ENCODE measurements at regions of chr3 and their contacts with region 1.

Region 1: DNA sequence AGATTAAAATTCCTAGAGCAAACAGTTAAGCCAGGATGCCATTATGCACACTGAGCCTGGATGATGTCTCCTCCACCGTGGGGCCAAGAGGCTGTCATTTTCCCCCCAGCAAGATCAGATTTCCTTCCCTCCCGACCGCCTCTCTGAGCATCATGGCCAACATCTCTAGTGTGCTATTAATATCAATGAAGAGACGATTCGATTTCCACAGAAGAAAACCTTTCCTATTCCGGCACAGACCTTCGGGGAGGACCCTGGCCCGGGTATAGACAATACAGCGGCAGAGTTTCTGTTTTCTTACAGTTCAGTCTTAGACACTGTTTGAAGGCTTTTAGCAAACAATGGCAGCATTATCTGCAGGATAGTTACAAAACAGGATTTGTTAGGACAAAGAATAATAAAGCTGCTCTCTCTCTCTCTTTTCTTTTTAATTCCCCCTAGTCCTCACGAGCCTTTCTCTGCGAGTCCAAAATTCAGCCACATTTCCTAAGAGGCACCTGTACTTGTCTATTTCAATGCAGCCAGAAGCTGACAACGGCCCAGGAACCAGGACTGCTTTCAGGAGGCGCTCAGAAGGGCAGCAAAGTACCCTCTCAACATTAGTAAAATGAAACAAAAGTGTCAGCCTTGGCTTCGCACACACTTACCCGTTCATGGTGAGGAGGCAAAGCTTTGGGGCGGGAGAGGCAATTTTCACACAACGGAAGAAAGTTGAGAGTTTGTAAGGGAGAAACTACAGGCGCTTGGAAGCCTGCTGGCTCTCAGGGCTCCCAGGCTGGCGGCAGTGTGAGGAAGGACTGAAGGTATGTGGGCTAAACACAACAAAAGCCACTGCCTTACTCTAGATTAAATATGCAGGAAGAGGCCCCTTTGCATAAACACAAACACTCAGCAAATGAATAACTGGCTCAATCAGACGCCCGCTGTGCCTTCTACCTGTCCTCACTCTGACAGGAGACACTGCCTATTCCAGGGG is 278.0 kb downstream of the FOXP1 start:
- DNase-seq: peak; percentile 44
- H3K4me3 Mint-ChIP-seq: peak overlapping the region; percentile 90
- H3K27ac Mint-ChIP-seq: peak overlapping the region; percentile 94
- H3K4me1 Mint-ChIP-seq: peaks cover 61% of the 10 kb centered on the region
- H3K27me3 Mint-ChIP-seq: no peaks in the 10 kb centered on the region

Region 2: DNA sequence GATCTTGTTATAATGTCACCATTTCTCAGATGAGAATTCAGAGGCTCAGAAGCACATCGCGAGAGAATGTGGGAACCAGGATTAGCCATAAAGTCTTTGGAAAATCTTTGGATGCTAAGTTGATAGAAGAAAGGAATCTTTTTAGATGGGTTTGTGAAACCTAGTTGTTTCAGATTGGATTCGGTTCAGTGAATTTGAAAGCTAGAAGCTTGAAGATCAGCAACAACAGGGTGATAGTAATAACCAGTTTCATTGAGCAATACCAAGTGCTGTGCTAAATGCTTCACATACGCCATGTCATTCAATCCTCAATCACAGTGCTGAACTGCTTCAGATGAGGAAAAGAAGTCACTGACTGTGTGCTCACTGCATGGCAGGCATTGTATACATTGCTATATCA is 1613.7 kb before region 1 on chr3:
- CTCF ChIA-PET with region 1: no interaction called
- intact Hi-C with region 1: no loop called
- DNase-seq: no peak
- H3K4me3 Mint-ChIP-seq: no peak overlapping the region
- H3K27ac Mint-ChIP-seq: no peak overlapping the region
- H3K4me1 Mint-ChIP-seq: no peaks in the 10 kb centered on the region
- H3K27me3 Mint-ChIP-seq: peaks cover 3% of the 10 kb centered on the region

Region 3: DNA sequence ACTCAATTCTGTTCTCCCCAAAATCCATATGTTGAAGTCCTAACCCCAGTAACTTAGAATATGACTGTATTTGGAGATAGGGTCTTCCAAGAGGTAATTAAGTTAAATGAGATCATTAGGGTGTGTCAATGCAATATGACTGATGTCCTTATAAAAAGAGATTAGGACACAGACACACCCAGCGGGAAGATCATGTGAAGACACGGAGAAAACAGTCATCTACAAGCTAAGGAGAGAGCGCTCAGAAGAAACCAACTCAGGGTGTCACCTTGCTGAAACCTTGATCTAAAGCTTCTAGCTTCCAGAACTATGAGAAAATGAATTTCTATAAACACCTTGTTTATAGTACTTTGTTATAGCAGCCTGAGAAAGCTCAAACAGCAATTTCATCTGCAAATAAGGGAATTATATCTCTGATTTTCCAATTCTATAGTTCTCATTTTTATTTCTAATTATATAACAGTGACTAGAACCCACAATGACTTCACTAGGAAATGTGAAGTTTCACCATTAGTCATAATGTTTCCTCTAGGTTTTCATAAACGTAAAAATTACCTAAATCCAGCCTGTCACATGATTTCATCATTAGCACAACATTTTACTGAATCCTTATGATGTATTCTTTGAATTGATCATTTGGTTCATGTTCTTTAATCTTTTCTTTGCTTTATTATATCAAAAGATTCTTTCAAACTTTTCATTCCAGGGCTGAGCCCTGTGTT is 533.9 kb before region 1 on chr3:
- CTCF ChIA-PET with region 1: no interaction called
- intact Hi-C with region 1: loop called (anchors 1 kb)
- DNase-seq: no peak
- H3K4me3 Mint-ChIP-seq: no peak overlapping the region
- H3K27ac Mint-ChIP-seq: no peak overlapping the region
- H3K4me1 Mint-ChIP-seq: peaks cover 14% of the 10 kb centered on the region
- H3K27me3 Mint-ChIP-seq: peaks cover 25% of the 10 kb centered on the region

Region 4: DNA sequence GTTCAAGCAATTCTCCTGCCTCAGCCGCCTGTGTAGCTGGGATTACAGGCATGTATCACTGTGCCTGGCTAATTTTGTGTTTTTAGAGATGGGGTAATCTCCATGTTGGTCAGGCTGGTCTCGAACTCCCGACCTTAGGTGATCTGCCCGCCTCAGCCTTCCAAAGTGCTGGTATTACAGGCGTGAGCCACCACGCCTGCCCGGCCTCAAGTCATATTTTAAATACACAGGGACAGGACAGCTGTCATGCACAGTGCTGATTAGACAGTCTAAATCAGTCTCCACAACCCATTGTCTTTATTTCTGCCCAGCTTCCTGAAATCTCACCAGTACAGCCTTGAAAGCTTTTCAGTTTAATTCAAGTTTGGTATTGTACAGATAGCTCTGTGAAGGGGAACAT is 309.4 kb before region 1 on chr3:
- CTCF ChIA-PET with region 1: no interaction called
- intact Hi-C with region 1: no loop called
- DNase-seq: no peak
- H3K4me3 Mint-ChIP-seq: no peak overlapping the region
- H3K27ac Mint-ChIP-seq: peak overlapping the region; percentile 20
- H3K4me1 Mint-ChIP-seq: peaks cover 55% of the 10 kb centered on the region
- H3K27me3 Mint-ChIP-seq: no peaks in the 10 kb centered on the region

Region 5: DNA sequence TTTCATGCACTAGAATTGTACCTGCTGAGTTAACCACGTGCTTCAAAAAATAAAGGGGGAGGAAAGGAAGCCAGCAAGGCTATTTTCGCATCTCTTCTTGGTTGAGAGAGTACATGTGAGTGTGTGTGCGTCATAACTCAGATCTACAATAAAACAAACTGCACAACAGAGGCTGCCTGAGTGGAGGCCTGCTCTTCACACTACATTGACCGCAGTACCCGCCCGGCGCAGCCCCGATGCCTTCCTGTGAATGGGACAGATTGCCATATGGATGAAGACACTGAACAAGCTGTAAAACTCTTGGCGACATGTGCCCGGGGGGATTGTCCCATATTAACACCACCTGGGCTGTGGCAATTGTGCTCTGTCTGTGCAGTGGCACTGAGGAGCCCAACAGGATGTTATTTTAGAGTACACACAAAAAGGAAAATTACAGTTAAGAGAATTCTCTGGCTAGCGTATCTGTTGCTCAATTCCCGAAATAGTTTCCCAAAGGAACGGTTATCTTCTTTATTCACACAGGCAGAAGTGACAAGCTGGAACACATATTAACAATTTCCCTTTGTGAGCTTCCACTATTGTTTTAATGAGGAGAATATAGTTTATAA is 273.5 kb before region 1 on chr3:
- CTCF ChIA-PET with region 1: no interaction called
- intact Hi-C with region 1: no loop called
- DNase-seq: peak; percentile 26
- H3K4me3 Mint-ChIP-seq: no peak overlapping the region
- H3K27ac Mint-ChIP-seq: peak overlapping the region; percentile 80
- H3K4me1 Mint-ChIP-seq: peaks cover 82% of the 10 kb centered on the region
- H3K27me3 Mint-ChIP-seq: no peaks in the 10 kb centered on the region

Region 6: GRCh38 chr3:71050538-71051258 is 254.8 kb before region 1 on chr3:
- CTCF ChIA-PET with region 1: no interaction called
- intact Hi-C with region 1: loop called (anchors 2 kb)
- DNase-seq: peak; percentile 77
- H3K4me3 Mint-ChIP-seq: peak overlapping the region; percentile 6
- H3K27ac Mint-ChIP-seq: peak overlapping the region; percentile 92
- H3K4me1 Mint-ChIP-seq: peaks cover 100% of the 10 kb centered on the region
- H3K27me3 Mint-ChIP-seq: no peaks in the 10 kb centered on the region

Region 7: DNA sequence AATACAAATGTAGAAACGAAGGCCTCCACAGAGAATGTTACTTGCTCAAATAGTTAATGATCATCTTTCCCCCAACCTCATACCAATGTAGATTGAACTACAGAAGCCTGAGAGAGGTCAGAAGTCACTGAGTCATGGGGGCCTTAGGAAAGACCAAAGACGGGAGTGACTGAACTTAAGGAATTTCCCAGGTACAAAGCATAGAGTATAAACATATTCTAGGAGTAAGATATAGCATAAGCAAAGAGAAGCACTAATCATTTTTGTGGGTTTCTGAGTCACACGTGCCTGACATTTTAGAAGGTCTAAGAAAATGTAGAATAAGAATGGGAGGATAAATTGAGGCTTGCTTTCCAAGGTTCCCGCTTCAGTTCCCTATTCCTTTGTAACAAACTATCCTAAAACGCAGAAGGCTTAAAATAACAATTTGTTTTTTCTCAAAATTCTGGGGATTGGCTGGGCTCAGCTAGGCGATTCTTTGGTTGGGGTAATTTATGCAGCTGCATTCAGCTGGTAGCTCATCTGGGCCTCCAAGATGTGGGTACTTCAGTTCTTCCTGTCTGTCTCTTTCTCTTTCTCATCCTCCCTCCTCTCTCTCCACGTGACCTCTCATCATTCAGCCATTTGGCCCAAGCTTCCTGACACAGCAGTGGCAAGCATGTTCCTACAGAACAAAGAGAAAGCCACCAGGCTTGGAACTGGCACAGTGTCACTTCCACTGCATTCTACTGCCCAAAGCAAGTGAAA is 144.5 kb before region 1 on chr3:
- CTCF ChIA-PET with region 1: no interaction called
- intact Hi-C with region 1: loop called (anchors 1 kb)
- DNase-seq: peak; percentile 44
- H3K4me3 Mint-ChIP-seq: peak overlapping the region; percentile 33
- H3K27ac Mint-ChIP-seq: peak overlapping the region; percentile 88
- H3K4me1 Mint-ChIP-seq: peaks cover 79% of the 10 kb centered on the region
- H3K27me3 Mint-ChIP-seq: no peaks in the 10 kb centered on the region

Region 8: DNA sequence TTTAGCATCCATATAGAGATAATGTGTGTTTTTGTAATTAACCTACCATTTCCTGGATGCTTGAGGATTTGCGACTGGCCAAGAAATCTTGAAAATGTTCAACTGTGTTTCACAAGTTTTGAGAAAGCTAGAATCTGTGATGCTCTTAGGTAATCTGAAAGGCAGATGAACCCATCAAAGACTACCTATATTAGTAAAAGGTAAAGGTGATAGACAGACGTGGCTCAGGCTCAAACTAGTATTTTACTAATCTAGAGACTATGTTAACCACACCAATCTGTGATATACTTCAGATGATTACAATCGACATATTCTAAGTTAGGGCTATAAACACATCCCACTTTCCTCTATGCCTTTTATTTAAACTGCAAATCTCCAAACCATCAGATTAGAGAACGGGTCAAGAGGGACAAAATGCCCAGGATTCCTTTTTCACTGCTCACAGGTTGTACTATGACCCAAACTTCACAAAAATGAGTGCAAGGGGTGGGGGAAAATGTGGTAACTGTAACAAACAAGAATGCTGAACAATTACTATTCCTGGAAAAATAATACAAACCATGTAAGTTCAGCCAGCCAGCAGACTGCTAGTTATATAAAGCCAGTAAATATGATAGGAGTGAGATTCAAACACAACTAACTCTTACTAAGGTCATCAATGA is 17.1 kb before region 1 on chr3:
- CTCF ChIA-PET with region 1: interaction called, 5 read pairs
- intact Hi-C with region 1: loop called (anchors 1 kb)
- DNase-seq: no peak
- H3K4me3 Mint-ChIP-seq: no peak overlapping the region
- H3K27ac Mint-ChIP-seq: peak overlapping the region; percentile 32
- H3K4me1 Mint-ChIP-seq: peaks cover 66% of the 10 kb centered on the region
- H3K27me3 Mint-ChIP-seq: no peaks in the 10 kb centered on the region

Region 9: DNA sequence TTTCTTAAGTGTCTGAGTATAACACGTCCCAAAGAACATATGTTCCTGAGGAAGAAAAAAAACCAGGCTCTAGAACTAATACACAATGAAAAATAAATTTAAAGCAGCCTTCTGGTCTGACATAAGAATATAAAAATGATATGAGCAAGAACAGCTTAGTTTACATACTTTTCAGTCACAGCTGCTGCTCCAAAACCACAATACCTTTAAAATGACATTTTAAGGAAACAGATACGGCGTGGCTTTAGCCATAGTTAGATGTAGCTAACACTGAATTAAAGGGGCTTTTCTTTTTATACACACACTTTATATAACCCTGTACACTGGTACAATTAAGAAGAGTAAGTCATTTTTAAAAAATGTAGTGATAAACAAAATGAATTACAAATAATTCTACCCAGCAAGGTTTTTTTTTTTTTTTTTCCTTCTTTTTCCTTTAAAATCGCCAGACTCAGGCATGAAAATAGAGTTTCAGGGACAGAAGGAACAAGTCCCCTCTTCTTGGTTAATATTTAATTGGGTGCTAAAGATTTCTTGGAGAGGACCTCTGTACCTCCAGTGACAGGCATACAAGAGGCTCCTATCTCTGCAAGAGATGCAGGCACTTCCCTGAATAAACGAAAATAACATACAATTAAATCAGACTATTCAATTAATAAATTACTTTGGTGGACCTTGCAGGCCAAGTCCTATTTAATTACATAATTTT is 12.4 kb after region 1 on chr3:
- CTCF ChIA-PET with region 1: no interaction called
- intact Hi-C with region 1: no loop called
- DNase-seq: no peak
- H3K4me3 Mint-ChIP-seq: no peak overlapping the region
- H3K27ac Mint-ChIP-seq: no peak overlapping the region
- H3K4me1 Mint-ChIP-seq: peaks cover 46% of the 10 kb centered on the region
- H3K27me3 Mint-ChIP-seq: no peaks in the 10 kb centered on the region

Region 10: GRCh38 chr3:71423151-71423906 is 117.8 kb after region 1 on chr3:
- CTCF ChIA-PET with region 1: no interaction called
- intact Hi-C with region 1: loop called (anchors 1 kb)
- DNase-seq: no peak
- H3K4me3 Mint-ChIP-seq: no peak overlapping the region
- H3K27ac Mint-ChIP-seq: peak overlapping the region; percentile 30
- H3K4me1 Mint-ChIP-seq: peaks cover 84% of the 10 kb centered on the region
- H3K27me3 Mint-ChIP-seq: no peaks in the 10 kb centered on the region

Region 11: DNA sequence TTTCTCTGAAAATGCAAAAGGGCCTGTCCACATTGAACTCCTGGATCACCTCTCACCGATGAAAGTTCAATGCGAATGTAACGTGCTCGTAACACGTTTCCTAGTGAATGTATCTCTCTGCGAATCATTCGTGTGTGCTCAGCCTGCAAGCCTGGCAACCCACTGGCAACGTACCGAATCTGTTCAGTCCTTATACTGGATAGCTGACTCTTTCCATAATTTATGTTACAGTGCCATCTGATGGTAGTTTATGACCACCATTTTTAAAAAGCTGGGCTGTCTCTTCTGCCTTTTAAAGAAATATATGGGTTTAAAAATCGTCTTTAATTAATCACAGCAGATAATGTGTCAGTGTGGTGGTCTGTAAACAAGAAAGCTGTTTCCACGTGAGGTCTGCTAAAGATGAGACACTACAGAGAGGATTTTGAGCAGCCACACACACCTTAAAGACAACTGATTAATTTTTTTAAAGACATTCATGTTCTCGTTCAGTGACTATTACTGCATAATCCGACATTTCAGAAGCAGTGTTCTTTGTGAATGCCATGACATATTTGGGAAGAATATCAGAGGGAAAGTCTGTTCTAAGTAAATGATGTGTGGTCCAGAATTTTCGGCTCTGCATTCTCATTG is 347.4 kb after region 1 on chr3:
- CTCF ChIA-PET with region 1: no interaction called
- intact Hi-C with region 1: loop called (anchors 5 kb)
- DNase-seq: peak; percentile 42
- H3K4me3 Mint-ChIP-seq: no peak overlapping the region
- H3K27ac Mint-ChIP-seq: no peak overlapping the region
- H3K4me1 Mint-ChIP-seq: peaks cover 4% of the 10 kb centered on the region
- H3K27me3 Mint-ChIP-seq: no peaks in the 10 kb centered on the region